Naive thymus-derived CD4-positive, alpha-beta T cell (primary cell): ENCODE measurements at regions of chr10 and their contacts with region 1.

Region 1: DNA sequence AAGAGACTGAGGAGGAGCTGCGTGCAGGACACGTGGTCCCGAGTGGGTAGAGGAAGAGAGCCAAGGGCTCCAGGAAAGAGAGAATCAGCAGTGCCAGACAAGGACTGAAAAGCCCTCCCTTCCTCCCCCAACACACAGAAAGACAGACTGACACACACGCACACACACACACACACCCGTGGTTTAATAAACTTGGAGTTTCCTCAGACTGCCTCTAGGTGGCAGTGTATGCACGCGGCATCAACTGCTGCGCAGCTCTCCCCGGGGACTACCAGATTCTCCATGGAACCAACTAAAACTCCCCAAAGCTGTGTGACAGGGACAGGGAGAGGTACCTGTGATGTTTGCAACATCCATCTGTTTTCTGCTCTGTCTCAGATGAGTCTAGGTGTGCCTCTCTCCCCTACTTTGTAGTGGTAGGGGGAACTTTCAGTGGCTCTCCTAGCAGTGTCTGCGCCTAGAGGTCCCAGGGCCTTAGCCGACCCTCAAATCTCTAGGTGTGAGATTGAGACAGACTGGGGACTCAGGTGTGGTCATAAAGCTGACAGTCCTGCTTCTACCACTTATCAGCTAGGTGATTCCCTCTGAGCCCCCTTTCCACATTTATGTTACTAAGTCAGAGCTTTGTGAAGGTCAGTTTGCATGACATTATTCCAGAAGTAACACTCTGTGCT is 9.3 kb upstream of the TSPAN14 start:
- DNase-seq: peak in 7 of 9 donors; percentile 60 to 83 (median 75)
- ATAC-seq: peak; percentile 86
- H3K4me3 ChIP-seq: no peak overlapping the region
- H3K4me3 Mint-ChIP-seq: peak overlapping the region in 9 of 10 donors; percentile 19 to 69 (median 39)
- H3K27ac ChIP-seq: no peak overlapping the region
- H3K27ac Mint-ChIP-seq: peak overlapping the region; percentile 29 to 90 (median 78)
- H3K4me1 ChIP-seq: peaks cover 0 to 39% of the 10 kb centered on the region in 2 donors
- H3K4me1 Mint-ChIP-seq: peaks cover 34 to 71% (median 55%) of the 10 kb centered on the region in 7 donors
- H3K27me3 ChIP-seq: no peaks in the 10 kb centered on the region
- H3K27me3 Mint-ChIP-seq: peaks cover 0 to 11% (median 0%) of the 10 kb centered on the region in 5 donors

Region 2: DNA sequence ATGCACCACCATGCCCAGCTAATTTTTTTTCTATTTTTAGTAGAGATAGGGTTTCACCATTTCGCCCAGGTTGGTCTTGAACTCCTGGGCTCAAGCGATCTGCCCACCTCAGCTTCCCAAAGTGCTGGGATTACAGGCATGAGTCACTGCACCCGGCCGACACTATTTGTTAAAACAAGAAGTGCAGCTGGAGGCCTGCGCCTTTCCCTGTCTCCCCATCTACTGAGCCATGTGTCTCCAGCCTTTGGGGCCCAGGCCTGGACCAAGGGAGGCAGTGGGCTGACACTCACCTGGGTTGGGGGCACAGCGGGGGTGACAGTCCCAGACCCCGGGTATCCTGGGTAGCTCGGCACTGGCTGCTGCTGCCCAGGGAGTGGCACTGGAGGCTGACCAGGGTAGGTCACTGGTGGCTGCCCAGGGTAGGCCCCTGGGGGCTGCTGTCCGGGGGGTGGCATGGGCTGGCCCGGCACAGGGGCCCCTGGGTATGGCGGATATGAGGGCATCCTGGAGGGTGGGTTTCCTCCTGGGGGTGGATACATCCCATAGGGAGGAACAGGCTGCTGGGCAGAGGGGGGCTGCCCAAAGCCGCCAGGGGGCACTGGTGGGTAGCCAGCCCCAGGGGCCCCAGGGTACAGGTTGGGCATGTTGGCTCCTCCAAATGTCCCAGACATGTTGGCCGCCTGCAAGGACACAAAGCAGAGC is 276.0 kb before region 1 on chr10:
- CTCF ChIA-PET with region 1: no interaction called
- POLR2A ChIA-PET with region 1: no interaction called
- intact Hi-C with region 1: no loop called
- DNase-seq: no peak
- ATAC-seq: no peak
- H3K4me3 ChIP-seq: no peak overlapping the region
- H3K4me3 Mint-ChIP-seq: no peak overlapping the region
- H3K27ac ChIP-seq: no peak overlapping the region
- H3K27ac Mint-ChIP-seq: peak overlapping the region in 1 of 9 donors; percentile 4
- H3K4me1 ChIP-seq: peaks cover 0 to 4% of the 10 kb centered on the region in 2 donors
- H3K4me1 Mint-ChIP-seq: peaks cover 8 to 25% (median 18%) of the 10 kb centered on the region in 7 donors
- H3K27me3 ChIP-seq: no peaks in the 10 kb centered on the region
- H3K27me3 Mint-ChIP-seq: no peaks in the 10 kb centered on the region

Region 3: GRCh38 chr10:80408242-80409101 is 36.3 kb before region 1 on chr10 and contains the start of gene PRXL2A:
- CTCF ChIA-PET with region 1: interaction called, 7 read pairs
- POLR2A ChIA-PET with region 1: interaction called, 3 read pairs
- intact Hi-C with region 1: loop called (anchors 2 to 5 kb)
- DNase-seq: peak; percentile 66 to 87 (median 76)
- ATAC-seq: peak; percentile 97
- H3K4me3 ChIP-seq: peak within 1 kb of the TSS; percentile 73
- H3K4me3 Mint-ChIP-seq: peak within 1 kb of the TSS; percentile 82 to 98 (median 92)
- H3K27ac ChIP-seq: peak within 1 kb of the TSS; percentile 71
- H3K27ac Mint-ChIP-seq: peak within 1 kb of the TSS; percentile 43 to 88 (median 82)
- H3K4me1 ChIP-seq: peaks cover 0 to 10% of the 10 kb centered on the region in 2 donors
- H3K4me1 Mint-ChIP-seq: peaks cover 27 to 55% (median 36%) of the 10 kb centered on the region in 7 donors
- H3K27me3 ChIP-seq: no peaks in the 10 kb centered on the region
- H3K27me3 Mint-ChIP-seq: peaks cover 0 to 28% (median 0%) of the 10 kb centered on the region in 5 donors
- total RNA-seq, gene PRXL2A: 5.6 to 9.7 (median 8.5) TPM

Region 4: DNA sequence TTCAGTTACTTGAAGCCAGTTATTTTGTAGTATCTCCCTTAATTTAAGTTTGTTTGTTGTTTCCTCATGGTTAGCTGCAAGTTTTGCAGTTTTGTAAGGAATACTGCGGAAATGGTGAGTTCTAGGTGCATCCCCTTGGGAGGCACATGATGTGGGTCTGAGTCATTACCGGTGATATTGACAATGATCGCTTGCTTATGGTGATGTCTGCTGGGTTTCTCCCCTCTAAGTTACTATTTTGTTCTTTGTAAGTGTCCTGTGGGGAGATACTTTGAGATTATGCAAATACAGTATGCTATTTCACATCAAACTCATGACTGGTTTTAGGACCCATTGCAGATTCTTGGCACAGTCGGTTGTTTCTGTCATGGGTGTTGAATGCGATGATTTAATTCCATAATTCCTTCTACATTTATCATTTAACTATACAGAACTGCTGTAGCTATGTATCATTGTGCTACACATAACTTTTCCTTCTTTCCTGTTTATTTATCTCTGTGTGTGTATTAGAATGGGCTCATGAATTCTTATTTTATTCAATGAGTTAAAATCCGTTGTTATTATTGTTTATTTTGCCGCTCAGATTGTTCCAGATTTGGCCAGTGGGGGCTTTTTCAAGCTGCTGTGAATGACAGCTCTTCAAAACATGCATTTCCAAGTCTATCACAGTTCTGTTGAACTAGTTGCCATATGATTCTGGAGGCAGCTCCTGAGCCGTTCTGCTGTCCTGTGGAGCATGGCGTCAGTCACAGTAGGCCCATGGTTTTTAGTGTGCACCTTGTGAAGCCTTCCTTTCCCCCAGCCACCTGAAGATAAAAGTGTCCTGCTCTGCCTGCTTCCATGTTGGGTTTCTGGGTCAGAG is 27.7 kb after region 1 on chr10:
- CTCF ChIA-PET with region 1: interaction called, 63 read pairs
- POLR2A ChIA-PET with region 1: interaction called, 318 read pairs
- intact Hi-C with region 1: no loop called
- DNase-seq: peak in 1 of 9 donors; percentile 47
- ATAC-seq: peak; percentile 75
- H3K4me3 ChIP-seq: peak overlapping the region; percentile 46
- H3K4me3 Mint-ChIP-seq: peak overlapping the region; percentile 69 to 98 (median 84)
- H3K27ac ChIP-seq: peak overlapping the region; percentile 84
- H3K27ac Mint-ChIP-seq: peak overlapping the region; percentile 84 to 99 (median 92)
- H3K4me1 ChIP-seq: peaks cover 79 to 81% of the 10 kb centered on the region in 2 donors
- H3K4me1 Mint-ChIP-seq: peaks cover 64 to 98% (median 88%) of the 10 kb centered on the region in 7 donors
- H3K27me3 ChIP-seq: no peaks in the 10 kb centered on the region
- H3K27me3 Mint-ChIP-seq: no peaks in the 10 kb centered on the region

Region 5: GRCh38 chr10:80504158-80504811 is 59.5 kb after region 1 on chr10:
- CTCF ChIA-PET with region 1: interaction called, 839 read pairs
- POLR2A ChIA-PET with region 1: interaction called, 582 read pairs
- intact Hi-C with region 1: loop called (anchors 1 kb)
- DNase-seq: no peak
- ATAC-seq: peak; percentile 52
- H3K4me3 ChIP-seq: no peak overlapping the region
- H3K4me3 Mint-ChIP-seq: peak overlapping the region; percentile 24 to 86 (median 71)
- H3K27ac ChIP-seq: peak overlapping the region; percentile 59
- H3K27ac Mint-ChIP-seq: peak overlapping the region; percentile 76 to 99 (median 89)
- H3K4me1 ChIP-seq: peaks cover 64 to 69% of the 10 kb centered on the region in 2 donors
- H3K4me1 Mint-ChIP-seq: peaks cover 63 to 84% (median 75%) of the 10 kb centered on the region in 7 donors
- H3K27me3 ChIP-seq: no peaks in the 10 kb centered on the region
- H3K27me3 Mint-ChIP-seq: no peaks in the 10 kb centered on the region

Region 6: DNA sequence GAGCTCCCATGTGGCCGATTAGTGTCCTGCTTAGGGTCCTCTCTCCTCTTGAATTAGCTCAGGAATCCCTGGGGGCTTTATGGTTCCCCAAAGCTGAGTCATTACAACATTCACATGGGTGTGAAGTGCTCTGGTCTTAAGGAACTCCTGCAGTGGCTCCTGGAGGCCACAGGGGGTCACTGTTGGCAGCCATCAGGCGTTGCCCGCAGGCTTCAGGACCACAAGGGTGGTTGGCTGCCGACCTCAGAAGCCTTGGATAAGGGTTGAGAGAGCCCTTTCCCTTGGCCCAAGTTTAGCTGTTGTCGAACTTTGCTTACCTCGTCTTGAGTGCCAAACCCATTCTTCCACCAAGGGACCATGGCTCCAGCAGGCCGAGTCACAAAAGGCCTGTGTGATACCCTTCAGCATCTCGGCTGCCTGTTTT is 154.7 kb after region 1 on chr10:
- CTCF ChIA-PET with region 1: interaction called, 5 read pairs
- POLR2A ChIA-PET with region 1: no interaction called
- intact Hi-C with region 1: loop called (anchors 5 kb)
- DNase-seq: peak in 5 of 9 donors; percentile 7 to 30 (median 10)
- ATAC-seq: peak; percentile 71
- H3K4me3 ChIP-seq: no peak overlapping the region
- H3K4me3 Mint-ChIP-seq: no peak overlapping the region
- H3K27ac ChIP-seq: no peak overlapping the region
- H3K27ac Mint-ChIP-seq: no peak overlapping the region
- H3K4me1 ChIP-seq: no peaks in the 10 kb centered on the region
- H3K4me1 Mint-ChIP-seq: peaks cover 0 to 3% (median 0%) of the 10 kb centered on the region in 7 donors
- H3K27me3 ChIP-seq: no peaks in the 10 kb centered on the region
- H3K27me3 Mint-ChIP-seq: peaks cover 0 to 2% (median 0%) of the 10 kb centered on the region in 5 donors

Region 7: GRCh38 chr10:80718024-80718423 is 273.2 kb after region 1 on chr10:
- CTCF ChIA-PET with region 1: no interaction called
- POLR2A ChIA-PET with region 1: no interaction called
- intact Hi-C with region 1: no loop called
- DNase-seq: no peak
- ATAC-seq: no peak
- H3K4me3 ChIP-seq: no peak overlapping the region
- H3K4me3 Mint-ChIP-seq: no peak overlapping the region
- H3K27ac ChIP-seq: no peak overlapping the region
- H3K27ac Mint-ChIP-seq: no peak overlapping the region
- H3K4me1 ChIP-seq: no peaks in the 10 kb centered on the region
- H3K4me1 Mint-ChIP-seq: no peaks in the 10 kb centered on the region
- H3K27me3 ChIP-seq: no peaks in the 10 kb centered on the region
- H3K27me3 Mint-ChIP-seq: peaks cover 0 to 22% (median 7%) of the 10 kb centered on the region in 5 donors

Region 8: GRCh38 chr10:80924063-80924952 is 479.5 kb after region 1 on chr10:
- CTCF ChIA-PET with region 1: interaction called, 3 read pairs
- POLR2A ChIA-PET with region 1: no interaction called
- intact Hi-C with region 1: loop called in 1 of 2 experiments (anchors 2 kb)
- DNase-seq: peak in 3 of 9 donors; percentile 1 to 14 (median 10)
- ATAC-seq: no peak
- H3K4me3 ChIP-seq: no peak overlapping the region
- H3K4me3 Mint-ChIP-seq: no peak overlapping the region
- H3K27ac ChIP-seq: no peak overlapping the region
- H3K27ac Mint-ChIP-seq: no peak overlapping the region
- H3K4me1 ChIP-seq: no peaks in the 10 kb centered on the region
- H3K4me1 Mint-ChIP-seq: no peaks in the 10 kb centered on the region
- H3K27me3 ChIP-seq: no peaks in the 10 kb centered on the region
- H3K27me3 Mint-ChIP-seq: peaks cover 17 to 32% (median 24%) of the 10 kb centered on the region in 5 donors